ENCODE measurements at regions of chr3 and their contacts with region 1.

Region 1: DNA sequence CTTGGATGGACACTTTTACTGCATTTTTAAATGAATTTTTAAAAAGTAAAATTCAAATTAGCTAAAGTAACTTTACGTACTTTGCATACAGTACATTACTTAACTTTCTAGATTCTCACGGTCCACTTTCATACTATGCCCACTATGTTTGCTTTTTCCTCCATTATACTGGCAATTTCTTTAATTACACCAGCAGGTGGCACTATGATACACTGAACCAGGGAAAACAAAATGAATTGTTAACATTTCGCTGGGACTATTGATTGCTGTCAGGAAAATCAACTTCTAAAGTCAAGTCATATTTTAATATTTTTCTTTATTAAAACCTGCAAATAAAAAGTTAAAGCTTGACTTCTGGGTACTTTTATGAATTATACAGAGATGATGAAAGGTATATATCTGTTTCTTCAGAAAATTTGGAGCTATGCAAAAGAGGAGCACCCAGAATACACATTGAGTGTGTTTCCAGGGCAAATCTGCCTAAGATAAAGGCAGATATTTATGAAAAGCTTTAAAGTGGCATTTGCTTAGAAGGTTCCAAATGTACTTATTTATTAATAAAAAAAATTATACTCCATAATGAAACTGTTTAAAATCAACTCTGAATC is 21.8 kb upstream of the POU1F1 start:
- DNase-seq: no peak
- ATAC-seq: peak; percentile 60
- H3K4me3 Mint-ChIP-seq: no peak overlapping the region
- H3K27ac Mint-ChIP-seq: no peak overlapping the region
- H3K4me1 Mint-ChIP-seq: no peaks in the 10 kb centered on the region
- H3K27me3 Mint-ChIP-seq: no peaks in the 10 kb centered on the region
- CTCF ChIP-seq: no peak; the same call in 1 of the 2 replicates

Region 2: GRCh38 chr3:87446849-87447387 is 148.7 kb after region 1 on chr3:
- CTCF ChIA-PET with region 1: no interaction called
- POLR2A ChIA-PET with region 1: interaction called, 10 read pairs
- DNase-seq: no peak
- ATAC-seq: peak; percentile 89
- H3K4me3 Mint-ChIP-seq: no peak overlapping the region
- H3K27ac Mint-ChIP-seq: no peak overlapping the region
- H3K4me1 Mint-ChIP-seq: peaks cover 11% of the 10 kb centered on the region
- H3K27me3 Mint-ChIP-seq: no peaks in the 10 kb centered on the region
- CTCF ChIP-seq: no peak

Region 3: GRCh38 chr3:87654184-87654583 is 356.0 kb after region 1 on chr3:
- CTCF ChIA-PET with region 1: no interaction called
- POLR2A ChIA-PET with region 1: no interaction called
- DNase-seq: no peak
- ATAC-seq: no peak
- H3K4me3 Mint-ChIP-seq: no peak overlapping the region
- H3K27ac Mint-ChIP-seq: no peak overlapping the region
- H3K4me1 Mint-ChIP-seq: no peaks in the 10 kb centered on the region
- H3K27me3 Mint-ChIP-seq: peaks cover 31% of the 10 kb centered on the region
- CTCF ChIP-seq: no peak

Measured in WTC11 (cell line).